ENCODE measurements at regions of chr14 and their contacts with region 1.

Region 1: DNA sequence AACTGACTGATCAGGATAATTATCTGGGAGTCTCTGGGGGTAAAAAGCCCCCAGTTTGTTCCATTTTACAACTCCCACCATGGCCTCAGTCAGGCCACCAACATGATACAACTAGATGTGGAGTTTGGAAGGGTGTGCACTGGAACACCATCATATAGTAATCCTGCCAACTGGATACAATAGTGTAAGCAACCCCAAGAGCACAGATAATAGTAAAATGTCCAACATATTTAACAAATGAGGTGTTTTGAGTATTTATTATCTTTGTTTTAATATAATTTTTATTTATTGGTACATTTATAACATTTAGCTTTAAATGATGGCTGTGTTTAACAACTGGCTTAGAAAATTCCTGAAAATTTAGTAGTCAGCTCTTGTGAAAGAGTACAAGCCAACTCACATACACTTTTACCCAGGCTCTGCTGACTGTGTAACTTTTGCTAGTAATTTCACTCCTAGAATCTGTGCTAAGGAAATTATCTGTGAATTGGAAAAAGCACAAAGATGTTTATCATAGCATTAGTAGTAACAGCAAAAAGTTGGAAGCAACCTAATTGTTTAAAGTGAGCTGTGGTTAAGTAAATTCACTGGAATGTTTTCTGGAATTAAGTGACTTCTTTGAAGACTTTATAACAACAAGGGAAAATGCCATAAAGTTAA is 196.8 kb downstream of the RAD51B start:
- DNase-seq: no peak
- ATAC-seq: peak; percentile 44
- H3K4me3 ChIP-seq: no peak overlapping the region
- H3K27ac ChIP-seq: no peak overlapping the region
- H3K4me1 ChIP-seq: peaks cover 28% of the 10 kb centered on the region
- H3K27me3 ChIP-seq: no peaks in the 10 kb centered on the region
- CTCF ChIP-seq: no peak

Region 2: GRCh38 chr14:67963960-67964744 is 52.2 kb before region 1 on chr14:
- CTCF ChIA-PET with region 1: no interaction called
- POLR2A ChIA-PET with region 1: no interaction called
- intact Hi-C with region 1: loop called (anchors 5 kb)
- DNase-seq: peak; percentile 90
- ATAC-seq: peak; percentile 88
- H3K4me3 ChIP-seq: peak overlapping the region; percentile 16
- H3K27ac ChIP-seq: peak overlapping the region; percentile 81
- H3K4me1 ChIP-seq: peaks cover 23% of the 10 kb centered on the region
- H3K27me3 ChIP-seq: no peaks in the 10 kb centered on the region
- CTCF ChIP-seq: no peak

Region 3: GRCh38 chr14:67994531-67994930 is 21.9 kb before region 1 on chr14:
- CTCF ChIA-PET with region 1: no interaction called
- POLR2A ChIA-PET with region 1: no interaction called
- intact Hi-C with region 1: no loop called
- DNase-seq: no peak
- ATAC-seq: no peak
- H3K4me3 ChIP-seq: no peak overlapping the region
- H3K27ac ChIP-seq: no peak overlapping the region
- H3K4me1 ChIP-seq: peaks cover 7% of the 10 kb centered on the region
- H3K27me3 ChIP-seq: no peaks in the 10 kb centered on the region
- CTCF ChIP-seq: no peak

Region 4: DNA sequence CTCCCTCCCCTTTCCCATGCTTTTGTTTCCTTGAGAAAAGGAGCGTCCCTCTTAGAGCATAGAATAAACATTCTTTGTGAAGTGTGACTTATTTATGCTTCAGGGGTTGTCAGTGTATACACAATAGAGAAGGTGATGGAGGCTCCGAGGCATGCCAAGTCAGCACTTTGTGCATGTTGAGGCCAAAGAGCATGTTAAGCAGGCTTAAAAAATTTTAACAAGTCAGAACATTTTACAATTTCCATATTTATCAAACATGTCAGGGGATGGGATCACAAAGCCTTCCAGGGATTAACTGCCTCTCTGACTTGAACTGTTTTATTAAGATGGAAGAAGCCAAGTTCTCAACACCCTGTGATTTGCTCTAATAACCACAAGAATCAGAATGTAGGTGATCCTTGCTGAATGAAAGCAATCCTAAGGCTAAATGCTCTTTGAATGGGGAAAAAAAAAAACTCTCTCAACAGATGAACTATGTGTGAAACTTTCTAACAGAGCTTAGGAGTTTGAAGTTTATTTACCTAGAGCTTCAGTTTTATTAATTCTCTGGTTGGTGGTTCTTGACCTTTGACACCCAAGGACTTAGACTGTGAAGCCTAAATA is 26.3 kb after region 1 on chr14:
- CTCF ChIA-PET with region 1: no interaction called
- POLR2A ChIA-PET with region 1: no interaction called
- intact Hi-C with region 1: loop called (anchors 2 kb)
- DNase-seq: peak; percentile 6
- ATAC-seq: peak; percentile 26
- H3K4me3 ChIP-seq: no peak overlapping the region
- H3K27ac ChIP-seq: no peak overlapping the region
- H3K4me1 ChIP-seq: peaks cover 15% of the 10 kb centered on the region
- H3K27me3 ChIP-seq: no peaks in the 10 kb centered on the region
- CTCF ChIP-seq: no peak

Region 5: DNA sequence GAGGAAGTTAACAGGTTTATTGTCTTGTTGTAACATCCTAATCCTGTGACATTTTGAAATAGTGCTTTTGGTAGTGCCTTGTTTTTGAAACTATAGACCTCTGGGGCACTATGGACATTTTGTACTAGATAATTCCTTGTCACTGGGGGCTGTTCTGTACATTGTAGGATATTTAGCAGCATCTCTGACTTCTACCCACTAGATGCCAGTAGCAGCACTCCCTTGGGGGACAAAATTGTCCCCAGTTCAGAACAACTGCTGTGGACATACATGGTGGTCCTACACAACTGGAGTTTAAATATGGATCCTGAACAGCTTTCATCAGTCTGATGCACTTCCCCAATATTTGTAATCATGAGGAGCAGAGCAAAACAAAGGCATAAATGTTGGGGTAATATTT is 67.9 kb after region 1 on chr14:
- CTCF ChIA-PET with region 1: no interaction called
- POLR2A ChIA-PET with region 1: no interaction called
- intact Hi-C with region 1: loop called (anchors 5 kb)
- DNase-seq: peak; percentile 37
- ATAC-seq: peak; percentile 48
- H3K4me3 ChIP-seq: no peak overlapping the region
- H3K27ac ChIP-seq: no peak overlapping the region
- H3K4me1 ChIP-seq: no peaks in the 10 kb centered on the region
- H3K27me3 ChIP-seq: no peaks in the 10 kb centered on the region
- CTCF ChIP-seq: peak; percentile 71